ENCODE measurements at regions of chr6 and their contacts with region 1.

Region 1: GRCh38 chr6:42166444-42167141 is 6.6 kb upstream of the GUCA1A start:
- DNase-seq: peak; percentile 92 to 96 (median 94)
- ATAC-seq: peak; percentile 93
- H3K4me3 ChIP-seq: no peak overlapping the region
- H3K27ac ChIP-seq: peak overlapping the region; percentile 38; the same call in 2 of the 3 replicates
- H3K4me1 ChIP-seq: peaks cover 4 to 6% of the 10 kb centered on the region in 2 experiments; a peak in 1 of 5 replicates
- H3K27me3 ChIP-seq: peaks cover 5 to 24% of the 10 kb centered on the region in 2 experiments; a peak in 3 of 5 replicates
- CTCF ChIP-seq: peak; percentile 93 to 99 (median 94)
- EP300 ChIP-seq: no peak
- POLR2A ChIP-seq: no peak
- RAD21 ChIP-seq: peak; percentile 98

Region 2: GRCh38 chr6:41201764-41202173 is 964.8 kb before region 1 on chr6:
- CTCF ChIA-PET with region 1: no interaction called
- POLR2A ChIA-PET with region 1: no interaction called
- in situ Hi-C with region 1: no loop called
- intact Hi-C with region 1: no loop called
- DNase-seq: peak; percentile 61 to 81 (median 68)
- ATAC-seq: peak; percentile 72
- H3K4me3 ChIP-seq: no peak overlapping the region
- H3K27ac ChIP-seq: peak overlapping the region; percentile 63
- H3K4me1 ChIP-seq: peaks cover 21 to 38% of the 10 kb centered on the region in 2 experiments
- H3K27me3 ChIP-seq: no peaks in the 10 kb centered on the region; a peak in 1 of 5 replicates
- CTCF ChIP-seq: no peak
- EP300 ChIP-seq: peak; percentile 65; the same call in 1 of the 2 replicates
- POLR2A ChIP-seq: 0 out of 2 replicates have a peak, but pooled peaks have one; percentile 40
- RAD21 ChIP-seq: no peak

Region 3: DNA sequence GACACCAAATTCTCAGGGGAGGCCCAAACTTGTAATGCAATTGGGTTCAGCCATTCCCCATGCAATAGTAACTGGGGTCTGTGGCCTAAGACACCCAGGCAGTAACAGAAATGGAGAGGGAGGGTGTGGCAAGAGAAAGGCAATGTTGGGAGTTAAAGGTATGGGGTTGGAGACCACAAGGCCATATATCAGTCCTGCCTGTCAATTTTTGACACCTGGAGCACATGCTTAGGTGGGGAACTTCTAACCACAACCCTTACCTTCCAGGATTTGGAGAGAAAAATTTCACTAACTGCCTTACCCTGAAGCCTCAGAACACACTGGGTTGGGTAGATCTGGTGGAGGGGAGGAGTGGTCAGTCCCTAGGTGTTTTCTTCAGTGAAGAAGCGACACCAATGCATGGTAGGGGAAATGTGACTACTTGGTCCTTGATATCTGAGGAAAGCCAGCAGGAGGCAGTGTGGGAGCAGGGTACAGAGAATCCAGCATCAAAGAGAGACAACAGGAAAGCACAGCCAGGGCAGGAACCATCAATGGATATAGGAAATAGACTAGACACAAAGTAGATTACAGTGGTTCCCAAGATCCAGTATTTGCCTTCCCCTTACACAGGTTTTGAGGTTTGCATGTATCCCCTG is 264.6 kb before region 1 on chr6:
- CTCF ChIA-PET with region 1: interaction called, 3 read pairs
- POLR2A ChIA-PET with region 1: no interaction called
- in situ Hi-C with region 1: no loop called
- intact Hi-C with region 1: loop called (anchors 1 kb)
- DNase-seq: peak; percentile 47 to 84 (median 66)
- ATAC-seq: peak; percentile 96
- H3K4me3 ChIP-seq: no peak overlapping the region
- H3K27ac ChIP-seq: no peak overlapping the region; the same call in 2 of the 3 replicates
- H3K4me1 ChIP-seq: peaks cover 0 to 2% of the 10 kb centered on the region in 2 experiments; a peak in 1 of 5 replicates
- H3K27me3 ChIP-seq: no peaks in the 10 kb centered on the region
- CTCF ChIP-seq: peak; percentile 85 to 96 (median 87)
- EP300 ChIP-seq: 0 out of 2 replicates have a peak, but pooled peaks have one; percentile 15
- POLR2A ChIP-seq: no peak
- RAD21 ChIP-seq: peak; percentile 96 to 98

Region 4: DNA sequence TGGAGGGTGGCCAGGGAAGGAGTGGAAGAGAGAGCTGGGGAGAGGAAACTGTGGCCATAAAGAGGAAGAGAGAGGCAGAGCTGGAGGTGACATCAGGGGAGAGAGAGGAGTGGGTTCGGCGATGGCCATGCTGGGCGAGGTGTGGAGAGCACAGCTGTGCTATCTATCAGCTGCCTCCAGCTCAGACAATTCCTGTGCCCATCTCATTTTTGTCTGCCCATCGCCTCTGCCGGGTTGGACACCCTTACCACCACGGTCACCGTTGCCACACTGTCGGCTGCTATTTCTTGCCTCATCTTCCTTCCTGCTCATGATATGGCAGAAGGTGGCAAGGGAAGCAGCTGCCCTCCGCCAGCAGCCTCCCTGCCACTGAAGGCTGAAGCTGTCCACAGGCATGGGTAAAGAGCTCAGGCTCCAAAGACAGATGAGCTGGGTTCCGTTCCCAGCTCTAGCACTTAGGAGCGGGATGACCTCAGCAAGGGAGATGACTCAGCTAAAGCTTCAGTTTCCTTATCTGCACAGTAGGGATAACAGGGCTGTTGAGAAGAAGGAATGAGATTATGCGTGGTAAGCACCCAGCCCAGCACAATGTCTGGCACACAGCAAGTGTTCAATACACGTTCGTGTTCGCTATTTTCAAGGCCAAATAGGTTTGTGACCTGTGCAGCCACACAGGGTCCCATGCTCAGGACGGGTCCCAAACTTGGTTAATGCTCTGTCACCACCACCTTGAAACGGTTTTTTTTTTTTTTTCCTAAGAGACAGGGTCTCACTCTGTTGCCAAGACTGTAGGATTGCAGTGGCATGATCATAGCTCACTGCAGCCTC is 138.1 kb before region 1 on chr6:
- CTCF ChIA-PET with region 1: no interaction called
- POLR2A ChIA-PET with region 1: no interaction called
- in situ Hi-C with region 1: no loop called
- intact Hi-C with region 1: no loop called
- DNase-seq: peak; percentile 92 to 98 (median 94)
- ATAC-seq: peak; percentile 87
- H3K4me3 ChIP-seq: peak overlapping the region; percentile 29
- H3K27ac ChIP-seq: peak overlapping the region; percentile 98
- H3K4me1 ChIP-seq: peaks cover 69 to 77% of the 10 kb centered on the region in 2 experiments
- H3K27me3 ChIP-seq: no peaks in the 10 kb centered on the region
- CTCF ChIP-seq: no peak
- EP300 ChIP-seq: peak; percentile 96
- POLR2A ChIP-seq: peak; percentile 90
- RAD21 ChIP-seq: peak; percentile 6 to 37; a peak in 2 of 4 replicates

Region 5: DNA sequence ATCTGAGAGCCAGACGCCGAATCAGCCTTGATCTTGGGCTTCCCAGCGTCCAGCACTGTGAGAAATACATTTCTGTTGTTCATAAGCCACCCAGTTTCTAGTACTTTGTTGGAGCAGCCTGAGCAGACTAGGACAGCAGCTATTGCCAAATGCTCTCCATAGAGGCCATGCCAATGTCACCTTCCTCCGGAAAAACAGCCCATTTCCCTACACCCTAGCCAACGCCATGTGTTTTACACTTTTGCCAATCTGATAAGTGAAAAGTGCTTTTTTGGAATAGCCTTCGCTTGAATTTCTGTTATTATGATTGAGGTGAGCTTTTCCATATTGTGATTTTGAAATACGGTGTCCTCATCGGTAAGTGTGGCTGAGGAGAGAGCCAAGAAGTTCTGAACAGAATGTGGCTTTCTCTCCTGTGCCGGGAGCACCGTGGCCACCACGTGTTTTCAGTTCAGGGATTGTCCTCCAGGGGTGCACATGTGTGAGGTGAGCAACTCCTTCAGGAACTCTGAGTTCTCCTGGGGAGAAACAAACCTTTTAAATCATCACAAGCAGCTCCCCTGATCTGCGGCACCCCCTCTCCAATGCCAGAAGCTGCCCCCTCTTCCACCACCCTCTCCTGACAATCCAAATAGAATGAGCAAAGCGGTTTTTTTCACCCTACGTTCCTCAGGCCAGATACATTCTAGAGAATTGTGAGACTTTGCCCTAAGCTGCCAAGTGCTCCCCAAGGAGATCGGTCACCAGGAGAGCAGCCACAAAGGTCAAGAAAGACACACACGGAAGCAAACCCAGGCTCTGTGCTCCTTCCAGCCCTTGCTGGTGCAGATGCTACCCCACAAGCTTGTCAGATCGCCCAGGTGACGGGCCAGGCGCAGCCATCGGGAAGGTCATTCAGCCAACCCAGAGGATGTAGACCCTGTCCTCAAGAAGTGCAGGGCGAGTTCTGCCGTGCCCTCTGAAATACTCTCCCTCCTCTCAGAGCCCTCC is 80.3 kb before region 1 on chr6:
- CTCF ChIA-PET with region 1: interaction called, 7 read pairs
- POLR2A ChIA-PET with region 1: no interaction called
- in situ Hi-C with region 1: no loop called
- intact Hi-C with region 1: loop called (anchors 2 kb)
- DNase-seq: peak; percentile 63 to 71 (median 66)
- ATAC-seq: peak; percentile 67
- H3K4me3 ChIP-seq: no peak overlapping the region
- H3K27ac ChIP-seq: no peak overlapping the region
- H3K4me1 ChIP-seq: peaks cover 27 to 32% of the 10 kb centered on the region in 2 experiments
- H3K27me3 ChIP-seq: no peaks in the 10 kb centered on the region
- CTCF ChIP-seq: peak; percentile 39 to 58 (median 42); a peak in 5 of 6 replicates
- EP300 ChIP-seq: no peak
- POLR2A ChIP-seq: no peak
- RAD21 ChIP-seq: peak in 1 of 2 experiments; percentile 23; a peak in 1 of 4 replicates

Region 6: GRCh38 chr6:42136508-42137193 is 29.9 kb before region 1 on chr6:
- CTCF ChIA-PET with region 1: no interaction called
- POLR2A ChIA-PET with region 1: interaction called, 3 read pairs
- in situ Hi-C with region 1: no loop called
- intact Hi-C with region 1: loop called (anchors 2 kb)
- DNase-seq: peak; percentile 88 to 91 (median 88)
- ATAC-seq: peak; percentile 83
- H3K4me3 ChIP-seq: 0 out of 2 replicates have a peak overlapping the region, but pooled peaks have one; percentile 1
- H3K27ac ChIP-seq: peak overlapping the region; percentile 70
- H3K4me1 ChIP-seq: peaks cover 34 to 46% of the 10 kb centered on the region in 2 experiments
- H3K27me3 ChIP-seq: no peaks in the 10 kb centered on the region
- CTCF ChIP-seq: peak; percentile 70 to 78 (median 74)
- EP300 ChIP-seq: peak; percentile 70
- POLR2A ChIP-seq: no peak
- RAD21 ChIP-seq: peak; percentile 17 to 65; a peak in 2 of 4 replicates

Region 7: GRCh38 chr6:42679358-42679757 is 512.8 kb after region 1 on chr6:
- CTCF ChIA-PET with region 1: no interaction called
- POLR2A ChIA-PET with region 1: no interaction called
- in situ Hi-C with region 1: no loop called
- intact Hi-C with region 1: no loop called
- DNase-seq: no peak
- ATAC-seq: no peak
- H3K4me3 ChIP-seq: no peak overlapping the region
- H3K27ac ChIP-seq: no peak overlapping the region
- H3K4me1 ChIP-seq: no peaks in the 10 kb centered on the region
- H3K27me3 ChIP-seq: no peaks in the 10 kb centered on the region
- CTCF ChIP-seq: no peak
- EP300 ChIP-seq: no peak
- POLR2A ChIP-seq: no peak
- RAD21 ChIP-seq: no peak